MCF 10A (cell line): ENCODE measurements at regions of chr3 and their contacts with region 1.

Region 1: DNA sequence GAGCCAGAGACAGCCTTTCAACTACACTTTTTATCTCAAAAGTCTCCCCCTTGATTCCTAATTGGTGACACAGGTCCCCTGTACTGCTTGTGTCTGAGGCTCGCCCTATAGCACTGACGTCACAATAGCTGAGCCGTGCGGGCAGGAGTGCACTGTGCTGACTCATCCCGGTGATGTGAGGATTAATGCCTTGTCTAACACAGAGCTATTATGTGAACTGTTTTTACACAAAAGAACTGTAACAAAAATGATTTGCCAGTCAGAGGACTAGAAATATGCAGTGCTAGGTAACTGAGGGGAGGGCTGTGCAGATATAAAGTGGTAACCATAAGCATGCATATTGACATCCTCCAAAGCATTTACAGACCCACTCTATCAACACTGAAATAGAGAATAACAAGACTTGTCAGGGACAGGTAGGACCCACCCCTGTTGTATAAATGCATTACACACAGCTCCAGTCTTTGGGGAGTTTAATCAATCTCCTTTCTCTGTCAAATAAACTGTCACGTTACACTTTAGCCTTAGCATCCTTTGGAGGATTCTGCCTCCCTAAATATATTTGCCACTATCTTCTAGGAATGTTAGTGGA is 205.0 kb downstream of the TIGIT start:
- DNase-seq: peak; percentile 89
- H3K4me3 Mint-ChIP-seq: no peak overlapping the region
- H3K27ac Mint-ChIP-seq: no peak overlapping the region
- H3K4me1 Mint-ChIP-seq: peaks cover 37% of the 10 kb centered on the region
- H3K27me3 Mint-ChIP-seq: no peaks in the 10 kb centered on the region
- CTCF ChIP-seq: no peak

Region 2: GRCh38 chr3:114456742-114457141 is 42.1 kb before region 1 on chr3:
- CTCF ChIA-PET with region 1: no interaction called
- POLR2A ChIA-PET with region 1: no interaction called
- intact Hi-C with region 1: no loop called
- DNase-seq: no peak
- H3K4me3 Mint-ChIP-seq: no peak overlapping the region
- H3K27ac Mint-ChIP-seq: no peak overlapping the region
- H3K4me1 Mint-ChIP-seq: peaks cover under 1% of the 10 kb centered on the region
- H3K27me3 Mint-ChIP-seq: no peaks in the 10 kb centered on the region
- CTCF ChIP-seq: no peak

Region 3: GRCh38 chr3:114550165-114550564 is 51.3 kb after region 1 on chr3:
- CTCF ChIA-PET with region 1: no interaction called
- POLR2A ChIA-PET with region 1: no interaction called
- intact Hi-C with region 1: no loop called
- DNase-seq: no peak
- H3K4me3 Mint-ChIP-seq: no peak overlapping the region
- H3K27ac Mint-ChIP-seq: no peak overlapping the region
- H3K4me1 Mint-ChIP-seq: peaks cover 7% of the 10 kb centered on the region
- H3K27me3 Mint-ChIP-seq: no peaks in the 10 kb centered on the region
- CTCF ChIP-seq: no peak

Region 4: GRCh38 chr3:114706591-114707232 is 207.8 kb after region 1 on chr3:
- CTCF ChIA-PET with region 1: no interaction called
- POLR2A ChIA-PET with region 1: interaction called, 3 read pairs
- intact Hi-C with region 1: loop called (anchors 5 kb)
- DNase-seq: peak; percentile 88
- H3K4me3 Mint-ChIP-seq: no peak overlapping the region
- H3K27ac Mint-ChIP-seq: peak overlapping the region; percentile 8
- H3K4me1 Mint-ChIP-seq: peaks cover 28% of the 10 kb centered on the region
- H3K27me3 Mint-ChIP-seq: no peaks in the 10 kb centered on the region
- CTCF ChIP-seq: no peak